GM10248 (cell line): ENCODE measurements at regions of chrX and their contacts with region 1.

Region 1: DNA sequence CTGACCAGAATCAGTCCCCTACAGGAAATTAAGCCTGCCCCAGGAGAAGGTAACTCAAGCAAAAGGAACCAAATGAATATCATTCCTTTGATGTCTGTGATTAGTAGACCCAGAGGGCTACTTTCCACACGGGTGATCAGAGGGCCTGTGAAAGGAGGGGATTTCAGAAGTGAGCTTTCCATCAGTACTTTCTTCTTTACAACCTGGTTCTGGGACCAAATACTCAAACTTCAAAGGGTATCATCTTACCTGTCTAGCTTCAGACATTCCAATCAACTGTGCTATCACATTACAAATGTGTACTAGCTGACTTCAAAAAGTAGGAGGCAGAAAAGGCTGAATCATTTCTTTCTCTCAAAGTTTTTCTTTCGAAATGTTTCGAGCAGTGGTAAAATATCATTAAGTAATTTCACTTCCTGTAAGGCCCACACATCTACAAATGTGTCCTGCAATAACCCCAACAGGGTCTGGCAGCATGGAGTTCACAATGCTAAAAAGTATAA is 23.9 kb downstream of the ACSL4 start:
- DNase-seq: peak; percentile 31
- CTCF ChIP-seq: no peak

Region 2: DNA sequence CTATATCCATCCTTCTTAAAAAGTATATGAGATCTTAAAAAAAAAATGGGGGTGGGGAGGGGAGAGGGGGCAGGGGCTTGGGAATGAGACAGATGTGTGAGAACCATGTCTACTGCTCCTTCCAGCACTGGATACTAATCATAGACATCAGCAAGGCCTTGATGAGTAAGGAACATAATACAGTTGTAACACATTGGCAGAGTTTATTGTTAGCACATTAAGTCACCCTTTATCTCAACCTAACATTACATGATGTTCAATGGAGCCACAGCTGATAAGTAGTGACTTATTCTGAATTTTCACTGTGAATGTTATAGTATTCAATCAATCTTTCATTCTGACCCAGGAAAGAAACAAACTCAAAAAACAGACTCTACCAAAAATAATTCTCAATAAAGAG is 36.9 kb before region 1 on chrX:
- CTCF ChIA-PET with region 1: no interaction called
- POLR2A ChIA-PET with region 1: no interaction called
- DNase-seq: no peak
- CTCF ChIP-seq: no peak

Region 3: GRCh38 chrX:109862433-109862832 is 153.3 kb after region 1 on chrX:
- CTCF ChIA-PET with region 1: interaction called, 52 read pairs
- POLR2A ChIA-PET with region 1: no interaction called
- DNase-seq: no peak
- CTCF ChIP-seq: no peak